WTC11 (cell line): ENCODE measurements at regions of chr1 and their contacts with region 1.

Region 1: GRCh38 chr1:31626223-31627207 is 9.0 kb downstream of the HCRTR1 start:
- DNase-seq: no peak
- ATAC-seq: peak; percentile 50
- H3K4me3 Mint-ChIP-seq: no peak overlapping the region
- H3K27ac Mint-ChIP-seq: no peak overlapping the region; the same call in 1 of the 2 replicates
- H3K4me1 Mint-ChIP-seq: 0 out of 2 replicates have a peak, but pooled peaks cover 4% of the 10 kb centered on the region
- H3K27me3 Mint-ChIP-seq: no peaks in the 10 kb centered on the region
- CTCF ChIP-seq: no peak

Region 2: GRCh38 chr1:32127409-32128198 is 501.1 kb after region 1 on chr1:
- CTCF ChIA-PET with region 1: no interaction called
- POLR2A ChIA-PET with region 1: interaction called, 10 read pairs
- DNase-seq: no peak
- ATAC-seq: no peak; the same call in 1 of the 2 replicates
- H3K4me3 Mint-ChIP-seq: no peak overlapping the region
- H3K27ac Mint-ChIP-seq: peak overlapping the region; percentile 31
- H3K4me1 Mint-ChIP-seq: peaks cover 25% of the 10 kb centered on the region
- H3K27me3 Mint-ChIP-seq: no peaks in the 10 kb centered on the region
- CTCF ChIP-seq: no peak